ENCODE measurements at regions of chr1 and their contacts with region 1.

Region 1: GRCh38 chr1:210400043-210400840 is 71.5 kb downstream of the HHAT start:
- DNase-seq: peak in 1 of 2 donors; percentile 41
- H3K4me3 ChIP-seq: no peak overlapping the region
- H3K27ac ChIP-seq: no peak overlapping the region
- H3K4me1 ChIP-seq: peaks cover 0 to 3% (median 0%) of the 10 kb centered on the region in 4 donors
- H3K27me3 ChIP-seq: no peaks in the 10 kb centered on the region
- CTCF ChIP-seq: peak; percentile 72 to 75

Region 2: DNA sequence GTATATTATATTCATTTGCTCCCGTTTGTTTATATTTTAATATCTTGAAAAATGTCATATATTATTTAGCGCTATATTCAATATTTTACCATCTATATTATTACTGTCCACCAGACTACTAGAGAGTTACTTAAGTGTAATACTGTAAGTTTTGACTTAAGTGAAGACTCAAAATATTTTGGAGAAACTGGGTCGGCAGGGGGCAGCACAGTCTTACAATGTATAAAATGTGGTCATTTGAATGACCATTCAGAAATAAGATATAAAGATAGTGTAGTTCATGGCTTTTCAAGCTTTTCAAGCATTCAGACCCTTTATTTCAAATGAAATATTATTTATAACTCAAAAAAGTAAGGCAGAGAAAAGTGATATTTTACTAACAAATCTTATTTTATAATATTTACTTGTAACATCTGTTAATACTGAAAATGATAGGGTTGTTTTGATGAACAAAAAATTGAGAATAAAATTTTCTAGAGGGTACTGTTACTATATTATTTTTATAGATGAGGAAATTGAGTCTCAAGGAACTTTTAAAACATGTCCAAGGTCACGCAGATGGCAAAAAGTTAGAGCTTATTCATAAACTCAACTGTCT is 256.7 kb before region 1 on chr1:
- intact Hi-C with region 1: loop called (anchors 10 kb)
- DNase-seq: peak; percentile 77 to 80
- H3K4me3 ChIP-seq: no peak overlapping the region
- H3K27ac ChIP-seq: no peak overlapping the region
- H3K4me1 ChIP-seq: no peaks in the 10 kb centered on the region
- H3K27me3 ChIP-seq: no peaks in the 10 kb centered on the region
- CTCF ChIP-seq: peak; percentile 60 to 74

Region 3: DNA sequence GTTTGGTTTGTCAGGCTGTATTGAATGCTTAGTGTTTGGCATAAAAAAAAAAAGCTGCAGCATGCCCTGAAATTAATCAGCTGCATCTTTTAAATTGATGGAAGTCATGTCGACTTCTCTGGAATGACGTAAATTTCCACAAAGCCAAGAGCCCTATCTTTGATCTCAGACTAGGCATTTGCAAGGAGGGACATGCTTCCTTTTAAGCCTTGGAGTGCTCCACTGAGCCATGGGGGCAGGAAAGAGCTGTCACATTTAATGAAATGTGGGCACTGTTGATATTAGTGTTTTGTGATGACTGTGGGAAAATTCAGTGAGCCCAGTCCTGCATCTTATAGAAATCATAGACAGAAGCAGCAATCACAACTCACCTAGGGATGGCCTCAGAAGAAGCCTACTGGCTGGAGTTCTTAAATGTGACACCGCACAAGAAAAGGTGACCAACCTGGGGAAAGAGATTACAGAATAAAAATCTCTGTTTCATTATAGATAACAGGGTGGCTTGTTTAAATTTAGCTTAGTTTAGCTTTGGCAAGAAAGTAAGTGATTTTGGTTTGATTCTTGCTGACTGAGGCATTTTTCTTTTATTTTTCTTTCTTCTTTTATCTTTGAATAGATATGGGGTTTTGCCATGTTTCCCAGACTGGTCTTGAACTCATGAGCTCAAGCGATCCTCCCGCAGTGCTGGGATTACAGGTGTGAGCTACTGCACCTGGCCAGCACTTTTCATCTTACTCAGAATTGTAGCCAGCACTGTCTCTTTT is 116.6 kb after region 1 on chr1:
- intact Hi-C with region 1: no loop called
- DNase-seq: no peak
- H3K4me3 ChIP-seq: no peak overlapping the region
- H3K27ac ChIP-seq: no peak overlapping the region
- H3K4me1 ChIP-seq: no peaks in the 10 kb centered on the region
- H3K27me3 ChIP-seq: no peaks in the 10 kb centered on the region
- CTCF ChIP-seq: no peak

Measured in tibial artery (tissue), 4 donors.